Activated naive CD4-positive, alpha-beta T cell treated with anti-CD3 and anti-CD28 coated beads, Interleukin-2, amount 10 ng/mL, durations not matched to agents 7 days and 5 days (primary cell): ENCODE measurements at regions of chr15 and their contacts with region 1.

Region 1: DNA sequence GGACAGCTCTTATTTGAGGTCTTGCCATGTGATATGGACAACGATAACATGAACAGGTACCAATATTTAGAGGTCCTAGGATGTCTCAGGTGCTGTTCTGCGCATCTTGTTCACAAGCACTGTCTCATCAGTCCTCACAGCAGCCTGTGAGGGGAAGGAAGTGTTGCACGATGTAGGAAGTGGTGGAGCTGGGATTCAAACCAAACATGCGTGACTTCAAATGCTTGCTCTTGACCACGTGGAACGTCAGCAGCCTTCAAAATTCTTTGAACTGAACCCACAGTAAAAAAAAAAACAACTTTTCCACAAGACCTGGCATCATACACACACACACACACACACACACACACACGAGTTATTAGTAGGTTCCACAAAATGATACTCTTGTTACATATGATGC is 153.4 kb upstream of the SMAD3 start:
- DNase-seq: peak; percentile 81
- H3K4me3 Mint-ChIP-seq: peak overlapping the region; percentile 34
- H3K27ac Mint-ChIP-seq: peak overlapping the region; percentile 85
- H3K4me1 Mint-ChIP-seq: peaks cover 60% of the 10 kb centered on the region
- H3K27me3 Mint-ChIP-seq: peaks cover 36% of the 10 kb centered on the region

Region 2: GRCh38 chr15:66901336-66902100 is 10.5 kb before region 1 on chr15:
- CTCF ChIA-PET with region 1: interaction called, 31 read pairs
- DNase-seq: no peak
- H3K4me3 Mint-ChIP-seq: no peak overlapping the region
- H3K27ac Mint-ChIP-seq: no peak overlapping the region
- H3K4me1 Mint-ChIP-seq: peaks cover 20% of the 10 kb centered on the region
- H3K27me3 Mint-ChIP-seq: peaks cover 28% of the 10 kb centered on the region

Region 3: GRCh38 chr15:66955871-66956585 is 44.0 kb after region 1 on chr15:
- CTCF ChIA-PET with region 1: no interaction called
- DNase-seq: no peak
- H3K4me3 Mint-ChIP-seq: no peak overlapping the region
- H3K27ac Mint-ChIP-seq: no peak overlapping the region
- H3K4me1 Mint-ChIP-seq: peaks cover 9% of the 10 kb centered on the region
- H3K27me3 Mint-ChIP-seq: peaks cover 49% of the 10 kb centered on the region